ENCODE measurements at regions of chr10 and their contacts with region 1.

Region 1: DNA sequence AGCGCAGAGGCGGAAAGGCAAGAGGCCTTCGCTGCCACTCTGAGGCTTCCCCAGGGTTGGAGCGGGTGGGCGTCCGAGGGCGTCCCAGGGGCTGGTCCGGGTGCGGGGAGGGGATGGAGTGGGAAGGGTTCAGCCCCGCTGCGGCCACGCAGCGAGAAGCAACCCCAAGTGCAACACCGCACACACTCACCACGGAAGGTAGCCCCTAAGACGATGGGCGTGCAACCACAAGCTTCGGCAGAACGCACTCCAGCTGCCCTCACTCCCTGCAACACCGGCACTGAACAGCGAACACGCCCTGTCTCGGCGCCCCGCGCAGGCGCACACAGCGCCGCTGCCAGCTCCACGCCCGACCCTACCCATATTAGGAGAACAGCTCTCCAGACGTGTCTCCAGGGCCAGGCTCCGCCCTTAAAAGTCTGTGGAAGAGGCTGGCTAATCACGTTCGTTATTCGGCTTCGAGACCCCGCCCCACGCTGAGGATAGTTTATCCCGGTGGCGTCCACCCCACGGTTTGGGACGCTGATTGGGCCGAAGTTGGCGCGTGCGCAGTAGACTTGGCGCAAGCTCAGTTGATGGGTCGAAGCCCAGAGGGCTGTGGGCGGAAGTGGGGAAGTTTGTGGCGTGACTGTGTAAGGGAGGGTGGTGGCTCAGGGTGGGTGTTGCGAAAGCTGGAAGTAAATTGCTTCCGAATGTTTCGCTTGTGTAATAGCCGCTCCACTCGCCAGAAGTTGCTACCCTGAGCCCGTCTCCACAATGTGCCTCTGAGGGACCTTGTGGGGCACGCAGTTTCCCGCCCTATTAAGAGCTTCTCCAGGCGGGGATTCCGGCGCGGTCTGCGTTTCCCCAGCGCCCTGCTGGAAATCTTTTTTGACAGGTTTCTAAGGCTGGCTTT is at the start of gene RSU1:
- DNase-seq: peak; percentile 100
- H3K4me3 Mint-ChIP-seq: peak within 1 kb of the TSS; percentile 91
- H3K27ac Mint-ChIP-seq: peak within 1 kb of the TSS; percentile 90
- H3K4me1 Mint-ChIP-seq: peaks cover 28% of the 10 kb centered on the region
- H3K27me3 Mint-ChIP-seq: peaks cover 1% of the 10 kb centered on the region
- total RNA-seq, gene RSU1: 60.6 to 61.9 TPM

Region 2: DNA sequence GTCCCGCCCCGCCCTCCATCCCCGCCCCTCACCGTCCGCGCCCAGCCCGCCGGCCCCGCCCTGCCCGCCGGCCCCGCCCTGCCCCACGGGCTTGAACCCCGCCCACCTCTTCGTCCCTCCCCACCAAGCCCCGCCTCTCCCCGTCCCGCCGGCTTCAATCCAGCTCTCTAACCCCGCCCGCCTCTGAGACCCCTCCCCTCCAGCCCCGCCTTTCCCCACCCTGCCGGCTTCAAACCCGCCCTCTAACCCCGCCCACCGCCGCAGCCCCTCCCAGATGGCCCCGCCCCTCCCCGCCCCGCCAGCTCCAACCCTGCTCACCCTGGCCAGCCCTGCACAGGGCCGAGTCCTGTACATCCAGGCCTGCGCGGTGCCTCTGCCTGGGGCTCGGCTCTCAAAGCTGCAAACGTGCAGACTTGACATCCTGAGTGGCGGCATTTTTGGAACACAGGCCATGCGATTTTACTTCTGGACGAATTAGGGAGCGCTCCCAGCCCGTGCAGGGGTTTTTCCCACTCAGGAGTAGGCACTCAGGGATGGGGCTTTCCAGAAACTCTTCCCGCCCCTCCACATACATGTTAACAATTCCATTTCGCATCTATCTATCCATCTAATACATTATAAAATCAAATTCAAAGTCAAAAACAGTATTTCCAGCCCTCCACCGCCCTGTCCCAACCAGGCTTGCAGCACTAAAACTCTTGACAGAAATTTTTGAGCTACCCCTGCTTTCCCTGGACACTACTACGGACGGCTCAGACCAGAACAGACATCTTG is 1648.4 kb before region 1 on chr10:
- CTCF ChIA-PET with region 1: no interaction called
- POLR2A ChIA-PET with region 1: no interaction called
- intact Hi-C with region 1: loop called (anchors 1 kb)
- DNase-seq: peak; percentile 98
- H3K4me3 Mint-ChIP-seq: peak overlapping the region; percentile 72
- H3K27ac Mint-ChIP-seq: peak overlapping the region; percentile 85
- H3K4me1 Mint-ChIP-seq: peaks cover 48% of the 10 kb centered on the region
- H3K27me3 Mint-ChIP-seq: no peaks in the 10 kb centered on the region

Region 3: GRCh38 chr10:16436758-16437539 is 380.4 kb before region 1 on chr10 and contains the start of gene PTER:
- CTCF ChIA-PET with region 1: no interaction called
- POLR2A ChIA-PET with region 1: interaction called, 3 read pairs
- intact Hi-C with region 1: loop called (anchors 1 kb)
- DNase-seq: peak; percentile 99
- H3K4me3 Mint-ChIP-seq: peak within 1 kb of the TSS; percentile 86
- H3K27ac Mint-ChIP-seq: peak within 1 kb of the TSS; percentile 84
- H3K4me1 Mint-ChIP-seq: peaks cover 43% of the 10 kb centered on the region
- H3K27me3 Mint-ChIP-seq: no peaks in the 10 kb centered on the region
- total RNA-seq, gene PTER: 25.1 to 27.2 TPM

Region 4: DNA sequence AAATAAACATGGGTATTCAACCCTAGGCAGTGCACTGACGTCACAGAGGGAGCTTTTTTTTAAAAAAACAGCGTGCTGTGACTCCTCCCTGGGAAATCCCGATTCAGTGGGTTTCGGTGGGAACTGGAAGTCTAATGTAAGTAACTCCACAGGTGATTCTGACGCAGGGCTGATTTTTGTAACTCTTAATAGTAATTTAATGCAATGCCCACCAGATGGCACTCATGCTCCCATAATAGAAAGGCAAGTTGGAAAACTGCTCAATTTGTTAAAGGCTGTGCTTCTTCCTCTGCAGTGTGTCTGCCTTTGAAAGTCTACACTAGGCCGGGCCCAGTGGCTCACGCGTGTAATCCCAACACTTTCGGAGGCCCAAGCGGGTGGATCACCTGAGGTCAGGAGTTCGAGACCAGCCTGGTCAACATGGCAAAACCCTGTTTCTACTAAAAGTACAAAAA is 10.8 kb after region 1 on chr10:
- CTCF ChIA-PET with region 1: interaction called, 10 read pairs
- POLR2A ChIA-PET with region 1: no interaction called
- intact Hi-C with region 1: no loop called
- DNase-seq: peak; percentile 61
- H3K4me3 Mint-ChIP-seq: no peak overlapping the region
- H3K27ac Mint-ChIP-seq: no peak overlapping the region
- H3K4me1 Mint-ChIP-seq: no peaks in the 10 kb centered on the region
- H3K27me3 Mint-ChIP-seq: no peaks in the 10 kb centered on the region

Region 5: GRCh38 chr10:17228091-17228940 is 410.9 kb after region 1 on chr10 and contains the start of gene VIM:
- CTCF ChIA-PET with region 1: interaction called, 4 read pairs
- POLR2A ChIA-PET with region 1: interaction called, 3 read pairs
- intact Hi-C with region 1: loop called (anchors 1 kb)
- DNase-seq: peak; percentile 93
- H3K4me3 Mint-ChIP-seq: peak within 1 kb of the TSS; percentile 95
- H3K27ac Mint-ChIP-seq: peak within 1 kb of the TSS; percentile 87
- H3K4me1 Mint-ChIP-seq: peaks cover 42% of the 10 kb centered on the region
- H3K27me3 Mint-ChIP-seq: peaks cover 1% of the 10 kb centered on the region
- total RNA-seq, gene VIM: 515 to 525 TPM

Region 6: DNA sequence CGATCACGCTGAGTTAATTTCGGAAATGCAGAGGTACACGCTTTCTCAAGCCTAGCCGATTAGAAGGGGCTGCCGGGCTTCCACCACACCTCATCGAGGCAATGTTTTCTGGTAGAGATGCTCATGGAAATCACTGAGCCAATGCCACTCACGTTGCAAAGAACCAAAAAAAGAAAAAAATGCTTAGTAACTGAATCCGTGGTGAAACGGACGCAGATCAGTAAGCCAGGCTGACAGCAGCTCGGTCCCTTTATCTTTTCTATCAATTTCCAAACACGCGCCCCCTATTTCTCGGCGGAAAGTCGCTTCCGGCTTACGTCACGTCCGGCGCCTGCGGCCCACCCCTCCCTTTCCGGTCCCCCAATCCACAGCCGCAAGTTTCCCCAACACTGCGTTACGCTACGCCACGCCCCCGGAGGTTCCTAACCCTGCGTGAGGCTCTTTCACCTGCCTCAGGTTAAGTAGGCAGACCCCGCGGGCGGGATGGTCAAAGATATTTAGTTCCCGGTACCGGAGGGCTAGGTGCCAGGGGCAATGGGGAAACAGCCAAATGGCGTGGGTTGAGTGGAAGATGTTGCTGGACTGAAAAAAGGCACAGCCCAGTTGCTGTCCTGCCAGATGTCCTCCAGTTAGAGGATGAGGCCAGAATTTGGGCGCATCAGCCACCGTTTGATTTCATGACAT is 1834.1 kb after region 1 on chr10 and contains the start of gene NSUN6:
- CTCF ChIA-PET with region 1: no interaction called
- POLR2A ChIA-PET with region 1: no interaction called
- intact Hi-C with region 1: loop called (anchors 2 kb)
- DNase-seq: peak; percentile 96
- H3K4me3 Mint-ChIP-seq: peak within 1 kb of the TSS; percentile 89
- H3K27ac Mint-ChIP-seq: peak within 1 kb of the TSS; percentile 93
- H3K4me1 Mint-ChIP-seq: peaks cover 32% of the 10 kb centered on the region
- H3K27me3 Mint-ChIP-seq: no peaks in the 10 kb centered on the region
- total RNA-seq, gene NSUN6: 12.6 to 15.0 TPM